AG04449 (cell line): ENCODE measurements at regions of chr6 and their contacts with region 1.

Region 1: DNA sequence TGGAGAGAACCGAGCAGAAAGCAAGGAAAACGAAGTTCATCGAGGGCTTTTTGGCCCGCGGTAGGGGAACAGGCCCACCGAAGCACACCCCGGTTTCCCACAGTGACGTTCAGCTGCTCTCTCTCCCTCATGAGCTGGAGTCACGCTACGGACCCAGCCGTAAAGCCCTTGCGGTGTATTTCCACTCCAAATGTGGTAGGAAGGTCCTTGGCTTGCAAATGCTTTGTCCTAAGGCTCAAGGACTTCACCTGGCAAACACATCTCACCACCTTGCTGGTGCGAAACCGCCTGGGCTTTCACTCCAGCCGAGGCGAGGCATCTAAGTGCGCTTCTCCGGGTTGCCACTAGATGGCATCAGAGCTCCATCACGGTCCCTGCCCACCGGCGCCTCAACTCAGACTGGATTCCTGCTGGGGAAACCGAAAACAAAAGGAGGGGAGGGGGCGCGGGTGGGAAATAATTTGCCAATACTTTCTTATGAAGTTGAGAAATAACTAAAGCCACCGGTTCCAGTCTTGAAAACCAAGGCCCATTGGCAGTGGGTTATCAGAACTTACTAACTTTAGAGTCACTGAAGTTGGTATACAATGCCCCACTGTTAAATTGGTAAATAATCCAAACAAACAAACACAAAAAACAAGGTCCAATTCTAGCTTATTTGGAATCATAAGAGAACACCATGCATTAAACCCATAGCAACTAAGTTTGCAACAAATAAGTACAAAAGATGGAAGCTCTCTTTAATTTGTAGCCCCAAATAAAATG is 13.4 kb upstream of the FOXC1 start:
- DNase-seq: no peak
- H3K4me3 ChIP-seq: peak overlapping the region; percentile 49
- CTCF ChIP-seq: peak; percentile 88

Region 2: GRCh38 chr6:1609648-1610496 is 13.6 kb after region 1 on chr6 and contains the start of gene FOXC1:
- CTCF ChIA-PET with region 1: interaction called, 32 read pairs
- POLR2A ChIA-PET with region 1: no interaction called
- DNase-seq: peak; percentile 57
- H3K4me3 ChIP-seq: peak within 1 kb of the TSS; percentile 72
- CTCF ChIP-seq: no peak

Region 3: DNA sequence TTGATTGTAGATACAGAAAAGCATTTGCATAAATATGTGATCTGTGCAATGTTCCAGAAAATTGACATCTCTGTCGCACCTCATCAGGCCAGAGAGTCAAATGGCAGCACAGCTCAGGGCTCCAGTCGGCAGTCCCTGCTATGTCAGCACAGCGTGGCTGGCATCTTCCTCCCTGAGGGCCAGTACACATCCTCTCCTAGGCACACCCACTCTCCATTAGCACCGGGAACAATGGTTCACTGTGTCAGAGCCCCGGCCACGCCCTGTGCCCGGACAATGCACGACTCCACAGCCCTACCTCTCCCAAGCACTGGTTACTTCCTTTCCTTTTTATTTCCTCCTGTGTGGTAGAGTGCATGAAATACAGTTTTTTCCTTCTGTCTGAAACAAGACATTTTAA is 128.3 kb after region 1 on chr6:
- CTCF ChIA-PET with region 1: no interaction called
- POLR2A ChIA-PET with region 1: no interaction called
- DNase-seq: no peak
- H3K4me3 ChIP-seq: no peak overlapping the region
- CTCF ChIP-seq: no peak

Region 4: GRCh38 chr6:2353412-2354137 is 757.3 kb after region 1 on chr6:
- CTCF ChIA-PET with region 1: interaction called, 83 read pairs
- POLR2A ChIA-PET with region 1: interaction called, 3 read pairs
- DNase-seq: peak; percentile 17
- H3K4me3 ChIP-seq: no peak overlapping the region
- CTCF ChIP-seq: peak; percentile 68

Region 5: GRCh38 chr6:2634139-2634964 is 1038.1 kb after region 1 on chr6:
- CTCF ChIA-PET with region 1: interaction called, 140 read pairs
- POLR2A ChIA-PET with region 1: no interaction called
- DNase-seq: peak; percentile 14
- H3K4me3 ChIP-seq: peak overlapping the region; percentile 54
- CTCF ChIP-seq: peak; percentile 98

Region 6: DNA sequence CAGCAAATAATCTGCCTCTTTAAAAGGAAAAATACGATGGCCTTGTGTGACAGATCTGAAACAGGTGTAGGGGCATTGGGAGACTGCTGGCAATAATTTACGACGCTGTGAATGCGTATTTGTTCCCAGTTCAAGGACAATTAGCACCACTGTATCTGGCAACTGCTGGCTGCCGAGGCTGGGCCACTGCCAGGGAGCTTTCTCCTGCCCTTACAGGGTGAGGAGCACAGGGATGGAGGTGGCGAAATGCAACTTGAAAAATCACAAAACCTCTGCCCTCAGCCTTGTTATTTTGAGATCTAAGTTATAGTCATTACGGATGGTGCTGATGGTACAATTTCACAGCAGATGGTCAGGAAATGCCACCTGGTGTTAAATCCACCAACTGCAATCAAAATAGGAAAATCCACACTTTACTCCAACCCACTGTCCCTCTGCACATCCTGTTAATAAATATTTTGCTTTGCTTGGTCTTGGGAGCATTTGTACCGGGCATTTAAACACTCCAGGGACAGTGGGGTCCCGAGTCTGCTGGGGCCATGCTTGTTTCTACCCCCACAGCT is 1148.0 kb after region 1 on chr6:
- CTCF ChIA-PET with region 1: interaction called, 106 read pairs
- POLR2A ChIA-PET with region 1: no interaction called
- DNase-seq: no peak
- H3K4me3 ChIP-seq: no peak overlapping the region
- CTCF ChIP-seq: peak; percentile 31